Activated naive CD4-positive, alpha-beta T cell treated with anti-CD3 and anti-CD28 coated beads for 36 hours (primary cell): ENCODE measurements at regions of chr18 and their contacts with region 1.

Region 1: DNA sequence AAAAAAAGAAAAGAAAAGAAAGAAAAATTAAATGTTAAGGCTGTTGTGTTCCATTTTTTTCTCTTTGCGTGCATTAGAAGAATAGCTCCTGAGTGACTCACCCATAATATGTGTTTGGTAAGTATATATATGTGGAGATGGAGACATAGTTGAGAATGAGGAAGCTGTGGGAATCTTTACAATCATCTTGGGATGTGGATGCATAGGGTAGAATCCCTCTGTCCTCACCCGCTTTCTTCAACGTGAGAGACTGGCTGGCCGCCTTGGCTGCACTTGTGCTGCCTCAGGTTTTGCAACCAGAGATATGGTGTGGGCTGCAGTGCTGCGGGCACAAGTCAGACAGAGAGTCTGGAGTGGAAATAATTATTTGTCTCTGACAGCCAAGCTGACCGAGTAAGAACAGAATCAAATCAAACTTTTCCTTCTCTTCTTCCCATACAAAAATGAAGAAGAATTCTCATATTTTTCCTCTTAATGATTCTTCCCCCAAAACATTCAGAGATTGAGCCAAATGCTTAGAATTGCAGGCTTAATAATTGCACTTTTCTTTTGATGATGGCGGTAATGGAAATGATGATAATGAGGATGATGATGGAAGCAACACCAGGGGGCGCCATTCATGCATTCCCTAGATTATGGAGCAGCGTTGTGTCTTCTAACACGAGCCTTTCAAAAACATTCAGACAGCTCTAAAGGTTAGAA is 48.5 kb downstream of the SERPINB7 start:
- DNase-seq: peak; percentile 60
- H3K4me3 Mint-ChIP-seq: no peak overlapping the region
- H3K27ac Mint-ChIP-seq: no peak overlapping the region
- H3K4me1 Mint-ChIP-seq: no peaks in the 10 kb centered on the region
- H3K27me3 Mint-ChIP-seq: peaks cover 5% of the 10 kb centered on the region

Region 2: DNA sequence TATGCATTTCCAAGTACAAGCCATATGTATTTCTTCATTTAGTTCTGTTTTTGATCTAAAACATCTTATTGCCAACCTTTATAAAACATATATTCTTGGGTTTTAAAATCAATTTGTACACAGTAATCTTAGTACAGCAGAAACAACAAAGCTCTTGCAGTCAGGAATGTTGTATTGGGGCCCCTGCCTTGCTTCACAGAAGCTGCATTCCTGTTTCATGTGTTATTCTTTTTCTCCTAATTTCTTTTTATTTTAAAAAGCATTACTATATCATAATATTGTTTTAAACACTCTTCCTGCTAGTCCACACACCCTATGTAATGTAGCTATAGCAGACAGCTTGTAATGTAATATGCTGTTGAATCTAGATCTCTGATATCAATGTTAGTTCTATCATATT is 24.5 kb before region 1 on chr18:
- CTCF ChIA-PET with region 1: no interaction called
- intact Hi-C with region 1: no loop called
- DNase-seq: no peak
- H3K4me3 Mint-ChIP-seq: no peak overlapping the region
- H3K27ac Mint-ChIP-seq: no peak overlapping the region
- H3K4me1 Mint-ChIP-seq: no peaks in the 10 kb centered on the region
- H3K27me3 Mint-ChIP-seq: peaks cover 1% of the 10 kb centered on the region

Region 3: GRCh38 chr18:63994783-63995399 is 171.2 kb after region 1 on chr18:
- CTCF ChIA-PET with region 1: interaction called, 5 read pairs
- intact Hi-C with region 1: loop called (anchors 1 kb)
- DNase-seq: peak; percentile 61
- H3K4me3 Mint-ChIP-seq: no peak overlapping the region
- H3K27ac Mint-ChIP-seq: no peak overlapping the region
- H3K4me1 Mint-ChIP-seq: peaks cover 5% of the 10 kb centered on the region
- H3K27me3 Mint-ChIP-seq: no peaks in the 10 kb centered on the region